OCI-LY7 (cell line): ENCODE measurements at regions of chr22 and their contacts with region 1.

Region 1: GRCh38 chr22:37643225-37643847 is 3.9 kb downstream of the SH3BP1 start:
- DNase-seq: peak; percentile 79
- H3K4me3 ChIP-seq: no peak overlapping the region
- H3K27ac ChIP-seq: no peak overlapping the region
- H3K4me1 ChIP-seq: peaks cover 28% of the 10 kb centered on the region
- CTCF ChIP-seq: peak; percentile 91

Region 2: GRCh38 chr22:37623075-37624016 is 20.0 kb before region 1 on chr22:
- CTCF ChIA-PET with region 1: no interaction called
- POLR2A ChIA-PET with region 1: interaction called, 4 read pairs
- intact Hi-C with region 1: loop called (anchors 1 kb)
- DNase-seq: peak; percentile 79
- H3K4me3 ChIP-seq: no peak overlapping the region
- H3K27ac ChIP-seq: peak overlapping the region; percentile 38
- H3K4me1 ChIP-seq: peaks cover 48% of the 10 kb centered on the region
- CTCF ChIP-seq: peak; percentile 93

Region 3: DNA sequence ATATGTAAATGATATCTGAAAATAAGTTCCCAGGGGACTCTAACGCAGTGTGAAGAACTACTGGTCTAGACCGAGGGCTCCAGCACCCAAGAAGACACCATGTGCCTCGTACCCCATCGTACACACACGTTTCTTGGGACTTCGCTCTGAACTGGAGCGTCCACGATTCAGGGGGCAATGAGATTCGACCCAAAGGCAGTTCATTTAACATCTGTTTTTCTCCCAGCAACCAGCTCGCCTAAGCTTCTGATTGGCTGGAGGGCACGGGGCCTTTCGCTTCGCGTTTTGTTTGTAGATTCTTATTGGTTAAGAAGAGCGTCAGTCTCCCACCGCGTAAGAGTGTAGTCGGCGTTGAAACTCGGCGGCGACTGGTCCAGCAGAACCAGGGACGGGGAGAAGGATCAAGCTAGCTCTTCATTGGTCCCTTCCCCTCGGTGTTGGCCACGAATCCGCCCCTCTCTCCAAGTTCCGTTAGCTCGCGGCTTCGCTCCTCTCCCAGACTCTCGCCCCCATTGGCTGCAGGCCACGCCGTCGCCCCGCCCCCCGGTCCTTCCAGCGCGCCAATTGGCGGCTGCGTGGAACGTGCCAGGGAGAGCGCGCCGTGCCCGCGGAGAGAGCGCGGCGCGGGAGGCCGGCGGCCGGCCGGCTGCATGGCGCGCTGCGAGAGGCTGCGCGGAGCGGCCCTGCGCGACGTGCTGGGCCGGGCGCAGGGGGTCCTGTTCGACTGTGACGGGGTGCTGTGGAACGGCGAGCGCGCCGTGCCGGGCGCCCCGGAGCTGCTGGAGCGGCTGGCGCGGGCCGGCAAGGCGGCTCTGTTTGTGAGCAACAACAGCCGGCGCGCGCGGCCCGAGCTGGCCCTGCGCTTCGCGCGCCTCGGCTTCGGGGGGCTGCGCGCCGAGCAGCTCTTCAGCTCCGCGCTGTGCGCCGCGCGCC is 15.1 kb after region 1 on chr22 and contains the start of gene PDXP:
- CTCF ChIA-PET with region 1: interaction called, 11 read pairs
- POLR2A ChIA-PET with region 1: interaction called, 9 read pairs
- intact Hi-C with region 1: no loop called
- DNase-seq: peak; percentile 100
- H3K4me3 ChIP-seq: peak within 1 kb of the TSS; percentile 90
- H3K27ac ChIP-seq: peak within 1 kb of the TSS; percentile 70
- H3K4me1 ChIP-seq: peaks cover 32% of the 10 kb centered on the region
- CTCF ChIP-seq: no peak
- total RNA-seq, gene PDXP: 50.0 and 61.2 TPM in 2 replicates